ENCODE measurements at regions of chr1 and their contacts with region 1.

Region 1: DNA sequence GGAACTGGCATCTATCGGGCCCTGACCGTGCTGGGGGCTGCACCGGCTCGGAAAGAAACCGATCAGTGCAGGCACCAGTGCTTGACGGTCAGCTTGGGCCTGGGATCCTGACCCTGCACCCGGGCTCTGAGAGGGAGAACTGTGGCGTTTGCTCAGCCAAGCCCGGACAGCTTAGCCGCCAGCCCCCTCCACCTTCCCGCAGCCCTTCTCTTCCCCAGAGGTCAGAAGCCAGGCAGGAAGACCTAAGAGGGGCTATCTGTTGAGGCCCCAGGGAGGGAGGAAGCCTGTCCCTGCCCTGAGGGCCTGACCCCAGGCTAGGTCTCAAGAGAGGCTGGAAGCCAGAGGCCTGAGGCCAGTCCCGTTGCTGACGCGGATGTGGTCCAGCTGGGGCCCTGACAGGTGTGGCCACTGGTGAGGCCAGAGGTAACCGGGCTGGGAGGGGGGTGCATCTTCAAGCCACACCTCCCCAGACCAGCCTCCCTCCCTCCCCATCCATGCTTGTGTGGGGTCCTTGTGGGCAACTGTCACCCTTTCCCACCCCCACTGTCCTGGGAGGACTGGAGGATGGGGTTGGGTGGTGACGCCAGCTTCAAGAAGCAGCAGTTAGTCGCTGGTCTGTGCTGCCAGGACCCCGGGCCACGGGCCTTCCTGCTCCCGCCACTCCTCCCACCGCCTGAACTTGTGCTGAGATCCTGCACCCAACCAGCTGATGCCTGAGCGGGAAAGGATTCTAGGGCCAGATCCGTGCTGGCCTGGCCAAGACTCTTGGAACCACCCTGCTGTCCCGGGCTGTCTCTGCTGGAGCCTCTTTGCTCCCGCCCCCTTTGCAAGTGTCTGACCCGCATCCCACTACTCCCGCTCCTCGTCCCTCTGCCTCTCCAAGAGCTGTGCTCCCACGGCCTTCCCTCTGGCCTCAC is 2.6 kb upstream of the DVL1 start:
- DNase-seq: no peak
- H3K4me3 ChIP-seq: peak overlapping the region in 1 of 3 donors; percentile 29
- H3K27ac ChIP-seq: peak overlapping the region; percentile 68 to 98
- H3K4me1 ChIP-seq: peaks cover 12 to 18% of the 10 kb centered on the region in 2 donors
- H3K27me3 ChIP-seq: no peaks in the 10 kb centered on the region
- CTCF ChIP-seq: no peak
- POLR2A ChIP-seq: no peak

Region 2: DNA sequence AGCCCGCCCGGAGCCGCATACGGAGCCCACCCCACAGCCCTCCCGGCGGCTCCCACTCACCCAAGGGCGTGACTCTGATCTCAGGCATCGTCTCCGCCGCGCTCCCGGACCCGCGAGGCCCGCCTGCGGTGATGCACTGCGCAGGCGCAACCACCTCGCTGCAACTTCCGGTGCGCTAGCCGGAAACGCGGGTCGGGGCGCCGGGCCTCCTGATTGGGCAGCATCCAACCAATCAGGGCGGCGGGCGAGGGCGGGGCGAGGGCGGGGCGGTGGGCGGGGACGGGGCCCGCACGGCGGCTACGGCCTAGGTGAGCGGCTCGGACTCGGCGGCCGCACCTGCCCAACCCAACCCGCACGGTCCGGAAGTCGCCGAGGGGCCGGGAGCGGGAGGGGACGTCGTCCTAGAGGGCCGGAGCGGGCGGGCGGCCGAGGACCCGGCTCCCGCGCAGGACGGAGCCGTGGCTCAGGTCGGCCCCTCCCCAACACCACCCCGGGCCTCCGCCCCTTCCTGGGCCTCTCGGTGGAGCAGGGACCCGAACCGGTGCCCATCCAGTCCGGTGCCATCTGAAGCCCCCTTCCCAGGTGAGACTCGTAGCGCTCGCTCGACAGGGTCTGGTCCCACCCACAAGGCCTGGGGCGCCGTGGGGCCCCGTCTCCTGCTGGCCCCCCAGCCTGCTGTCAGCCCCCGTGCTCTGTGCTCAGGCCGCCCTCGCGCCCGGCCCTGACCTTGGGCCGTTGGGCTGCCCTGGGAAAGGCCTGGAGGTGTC is 27.1 kb before region 1 on chr1 and contains the starts of genes CPTP and INTS11:
- intact Hi-C with region 1: loop called (anchors 1 kb)
- DNase-seq: peak; percentile 89 to 96
- H3K4me3 ChIP-seq: peak within 1 kb of the TSS; percentile 96 to 100 (median 98)
- H3K27ac ChIP-seq: peak within 1 kb of the TSS; percentile 91 to 93
- H3K4me1 ChIP-seq: peaks cover 10 to 17% of the 10 kb centered on the region in 2 donors
- H3K27me3 ChIP-seq: no peaks in the 10 kb centered on the region
- CTCF ChIP-seq: no peak
- POLR2A ChIP-seq: peak; percentile 38
- total RNA-seq, gene CPTP: 9.0 to 16.4 (median 13.4) TPM
- total RNA-seq, gene INTS11: 68.6 to 125 (median 119) TPM

Region 3: GRCh38 chr1:1890506-1891348 is 539.0 kb after region 1 on chr1 and contains the start of gene GNB1:
- intact Hi-C with region 1: no loop called
- DNase-seq: peak; percentile 72 to 81
- H3K4me3 ChIP-seq: peak within 1 kb of the TSS; percentile 84 to 99 (median 88)
- H3K27ac ChIP-seq: peak within 1 kb of the TSS; percentile 93 to 99
- H3K4me1 ChIP-seq: peaks cover 4 to 20% of the 10 kb centered on the region in 2 donors
- H3K27me3 ChIP-seq: no peaks in the 10 kb centered on the region
- CTCF ChIP-seq: no peak
- POLR2A ChIP-seq: no peak
- total RNA-seq, gene GNB1: 108 to 138 (median 123) TPM

Region 4: GRCh38 chr1:2108213-2108876 is 756.6 kb after region 1 on chr1:
- intact Hi-C with region 1: no loop called
- DNase-seq: no peak
- H3K4me3 ChIP-seq: no peak overlapping the region
- H3K27ac ChIP-seq: no peak overlapping the region
- H3K4me1 ChIP-seq: no peaks in the 10 kb centered on the region
- H3K27me3 ChIP-seq: no peaks in the 10 kb centered on the region
- CTCF ChIP-seq: no peak
- POLR2A ChIP-seq: no peak

Measured in breast epithelium (tissue), 4 donors.